Left lung (tissue), 14 donors: ENCODE measurements at regions of chr2 and their contacts with region 1.

Region 1: GRCh38 chr2:55282110-55282917 is 13.3 kb upstream of the MTIF2 start:
- DNase-seq: peak; percentile 75 to 100 (median 90)
- ATAC-seq: peak; percentile 99
- H3K4me3 ChIP-seq: peak overlapping the region; percentile 54 to 68
- H3K27ac ChIP-seq: peak overlapping the region; percentile 92 to 97
- H3K4me1 ChIP-seq: peaks cover 0 to 14% of the 10 kb centered on the region in 2 donors
- H3K27me3 ChIP-seq: no peaks in the 10 kb centered on the region
- CTCF ChIP-seq: no peak

Region 2: DNA sequence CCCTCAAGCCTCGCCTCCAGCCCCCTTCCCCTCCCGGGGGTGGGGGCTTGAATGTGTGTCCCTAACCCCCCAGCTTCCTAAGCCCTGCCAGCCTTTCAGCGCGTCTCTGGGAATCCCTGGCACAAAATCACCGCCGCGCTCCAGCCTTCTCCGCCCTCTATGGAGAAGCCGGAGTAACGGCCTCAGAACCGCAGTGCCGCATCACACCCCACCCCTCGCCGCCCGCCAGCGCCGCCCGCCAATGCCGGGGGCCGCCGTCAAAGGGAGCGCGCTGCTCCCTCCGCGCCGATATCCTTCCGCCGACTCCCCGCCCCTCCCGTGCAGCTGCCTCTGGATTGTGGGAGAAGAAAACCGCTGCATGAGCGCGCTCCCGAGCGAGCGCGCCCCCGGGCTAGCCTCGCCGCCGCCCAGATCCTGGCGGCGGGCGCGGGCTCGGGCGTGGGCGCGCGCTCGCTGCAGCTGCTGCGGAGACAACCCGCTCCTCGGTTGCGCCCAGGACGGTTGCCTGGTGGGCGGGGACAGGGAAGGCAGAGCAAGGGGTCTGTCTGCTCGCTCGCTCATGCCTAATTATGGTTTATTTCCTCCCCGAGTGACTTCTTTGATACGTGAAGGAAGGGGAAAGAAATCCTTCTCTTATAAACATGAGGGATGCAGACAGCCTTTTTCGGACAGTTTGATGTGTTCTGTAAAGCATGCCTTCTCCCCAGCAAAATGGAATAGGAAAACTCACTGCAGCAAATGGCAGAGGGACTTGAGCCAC is 137.5 kb after region 1 on chr2 and contains the start of gene CCDC88A:
- intact Hi-C with region 1: loop called in 1 of 2 experiments (anchors 10 kb)
- DNase-seq: peak; percentile 97 to 99 (median 98)
- ATAC-seq: peak; percentile 96
- H3K4me3 ChIP-seq: peak within 1 kb of the TSS; percentile 72 to 78
- H3K27ac ChIP-seq: peak within 1 kb of the TSS; percentile 93 to 95
- H3K4me1 ChIP-seq: peaks cover 0 to 46% of the 10 kb centered on the region in 2 donors
- H3K27me3 ChIP-seq: no peaks in the 10 kb centered on the region
- CTCF ChIP-seq: peak in 1 of 2 donors; percentile 16
- polyA plus RNA-seq, gene CCDC88A: 85.2 to 107 (median 101) TPM